H1 (cell line): ENCODE measurements at regions of chr10 and their contacts with region 1.

Region 1: GRCh38 chr10:77970869-77971803 is 44.6 kb upstream of the DLG5 start:
- DNase-seq: no peak
- H3K4me3 ChIP-seq: no peak overlapping the region
- H3K27ac ChIP-seq: peak overlapping the region; percentile 27; the same call in 1 of the 2 replicates
- H3K4me1 ChIP-seq: peaks cover 0 to 6% (median 0%) of the 10 kb centered on the region in 4 experiments; a peak in 2 of 7 replicates
- H3K27me3 ChIP-seq: no peaks in the 10 kb centered on the region
- CTCF ChIP-seq: no peak
- EP300 ChIP-seq: no peak
- POLR2A ChIP-seq: no peak
- RAD21 ChIP-seq: no peak

Region 2: DNA sequence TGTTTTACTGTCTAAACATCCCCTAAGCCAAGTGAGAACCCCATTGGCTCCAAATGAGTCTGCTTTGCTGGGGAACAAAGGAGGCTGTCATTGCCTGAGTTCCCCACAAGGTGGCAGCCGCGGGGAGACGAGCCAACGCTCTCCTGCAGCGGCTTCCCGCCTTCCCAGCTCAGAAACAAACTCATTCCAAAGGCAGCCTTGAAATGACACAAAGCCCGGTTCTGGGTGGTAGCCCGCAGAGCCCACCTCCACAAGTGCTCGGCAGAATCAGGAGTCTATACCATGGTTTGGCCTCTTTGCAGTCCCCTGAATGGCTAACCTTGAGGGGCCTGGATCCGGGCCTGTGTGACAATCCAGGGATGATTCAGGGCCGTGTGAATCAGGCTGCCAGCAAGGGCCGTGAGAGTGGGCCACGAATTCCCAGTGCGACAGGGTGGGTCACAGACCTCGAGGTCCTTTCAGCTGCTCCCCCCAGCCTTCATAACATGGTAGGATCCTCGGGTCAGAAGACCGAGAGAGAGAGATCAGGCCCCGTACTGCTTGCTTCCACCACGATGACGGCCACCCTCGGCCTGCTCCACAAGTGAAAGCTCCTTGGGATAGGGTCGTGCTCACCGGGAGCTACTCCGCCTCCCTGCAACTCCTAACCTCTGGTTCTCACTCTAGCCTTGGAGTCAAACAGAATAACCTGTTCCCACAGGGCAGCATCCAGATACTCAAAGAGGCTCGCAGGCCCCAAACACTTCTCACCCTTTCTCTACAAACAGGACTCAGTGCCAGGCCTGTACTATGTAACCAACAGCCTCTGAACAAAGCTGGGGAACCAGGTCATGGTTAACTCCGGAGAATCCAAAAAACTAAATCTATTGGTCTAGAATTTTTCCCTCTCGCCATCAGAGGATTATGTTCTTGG is 124.2 kb before region 1 on chr10:
- CTCF ChIA-PET with region 1: interaction called, 28 read pairs
- POLR2A ChIA-PET with region 1: interaction called, 3 read pairs
- DNase-seq: peak; percentile 63 to 95
- H3K4me3 ChIP-seq: no peak overlapping the region
- H3K27ac ChIP-seq: peak overlapping the region; percentile 62; the same call in 1 of the 2 replicates
- H3K4me1 ChIP-seq: peaks cover 11 to 25% (median 12%) of the 10 kb centered on the region in 4 experiments
- H3K27me3 ChIP-seq: no peaks in the 10 kb centered on the region
- CTCF ChIP-seq: peak; percentile 87 to 91 (median 91)
- EP300 ChIP-seq: no peak
- POLR2A ChIP-seq: no peak
- RAD21 ChIP-seq: peak; percentile 81 to 86

Region 3: GRCh38 chr10:77898647-77899477 is 72.3 kb before region 1 on chr10:
- CTCF ChIA-PET with region 1: interaction called, 15 read pairs
- POLR2A ChIA-PET with region 1: interaction called, 3 read pairs
- DNase-seq: no peak
- H3K4me3 ChIP-seq: no peak overlapping the region
- H3K27ac ChIP-seq: no peak overlapping the region
- H3K4me1 ChIP-seq: peaks cover 0 to 15% (median 10%) of the 10 kb centered on the region in 4 experiments; a peak in 5 of 7 replicates
- H3K27me3 ChIP-seq: no peaks in the 10 kb centered on the region
- CTCF ChIP-seq: no peak
- EP300 ChIP-seq: no peak
- POLR2A ChIP-seq: no peak
- RAD21 ChIP-seq: no peak

Region 4: GRCh38 chr10:77926566-77927401 is 44.4 kb before region 1 on chr10 and contains the start of gene DLG5:
- CTCF ChIA-PET with region 1: interaction called, 18 read pairs
- POLR2A ChIA-PET with region 1: interaction called, 26 read pairs
- DNase-seq: peak in 1 of 2 experiments; percentile 68
- H3K4me3 ChIP-seq: peak within 1 kb of the TSS; percentile 59 to 83 (median 80)
- H3K27ac ChIP-seq: peak within 1 kb of the TSS; percentile 79; the same call in 1 of the 2 replicates
- H3K4me1 ChIP-seq: peaks cover 5 to 19% (median 8%) of the 10 kb centered on the region in 4 experiments
- H3K27me3 ChIP-seq: peaks cover 0 to 4% (median 2%) of the 10 kb centered on the region in 4 experiments; a peak in 1 of 7 replicates
- CTCF ChIP-seq: no peak
- EP300 ChIP-seq: no peak
- POLR2A ChIP-seq: no peak
- RAD21 ChIP-seq: peak in 1 of 2 experiments; percentile 5; a peak in 1 of 4 replicates
- total RNA-seq, gene DLG5: 71.4 and 71.8 TPM in 2 replicates

Region 5: GRCh38 chr10:77959384-77959783 is 11.8 kb before region 1 on chr10:
- CTCF ChIA-PET with region 1: interaction called, 10 read pairs
- POLR2A ChIA-PET with region 1: interaction called, 8 read pairs
- DNase-seq: no peak
- H3K4me3 ChIP-seq: no peak overlapping the region
- H3K27ac ChIP-seq: no peak overlapping the region
- H3K4me1 ChIP-seq: peaks cover 0 to 6% (median 0%) of the 10 kb centered on the region in 4 experiments; a peak in 1 of 7 replicates
- H3K27me3 ChIP-seq: no peaks in the 10 kb centered on the region
- CTCF ChIP-seq: no peak
- EP300 ChIP-seq: no peak
- POLR2A ChIP-seq: no peak
- RAD21 ChIP-seq: no peak

Region 6: GRCh38 chr10:78231939-78232338 is 260.8 kb after region 1 on chr10:
- CTCF ChIA-PET with region 1: no interaction called
- POLR2A ChIA-PET with region 1: no interaction called
- DNase-seq: no peak
- H3K4me3 ChIP-seq: no peak overlapping the region
- H3K27ac ChIP-seq: no peak overlapping the region
- H3K4me1 ChIP-seq: no peaks in the 10 kb centered on the region
- H3K27me3 ChIP-seq: no peaks in the 10 kb centered on the region; a peak in 1 of 7 replicates
- CTCF ChIP-seq: peak in 2 of 3 experiments; percentile 30 to 52; a peak in 2 of 4 replicates
- EP300 ChIP-seq: no peak
- POLR2A ChIP-seq: no peak
- RAD21 ChIP-seq: peak; percentile 44 to 65